GM23248 (cell line): ENCODE measurements at regions of chr13 and their contacts with region 1.

Region 1: GRCh38 chr13:36420437-36420891 is 11.8 kb upstream of the CCNA1 start:
- DNase-seq: peak; percentile 80
- H3K4me3 ChIP-seq: no peak overlapping the region
- H3K27ac ChIP-seq: no peak overlapping the region
- H3K4me1 ChIP-seq: peaks cover 9% of the 10 kb centered on the region
- H3K27me3 ChIP-seq: 0 out of 2 replicates have a peak, but pooled peaks cover 8% of the 10 kb centered on the region

Region 2: GRCh38 chr13:36549755-36550154 is 129.3 kb after region 1 on chr13:
- in situ Hi-C with region 1: no loop called
- DNase-seq: no peak
- H3K4me3 ChIP-seq: no peak overlapping the region
- H3K27ac ChIP-seq: no peak overlapping the region
- H3K4me1 ChIP-seq: no peaks in the 10 kb centered on the region
- H3K27me3 ChIP-seq: no peaks in the 10 kb centered on the region

Region 3: GRCh38 chr13:36999054-36999714 is 578.7 kb after region 1 on chr13 and contains the start of gene ALG5:
- in situ Hi-C with region 1: loop called (anchors 25 kb)
- DNase-seq: peak; percentile 94
- H3K4me3 ChIP-seq: peak within 1 kb of the TSS; percentile 95
- H3K27ac ChIP-seq: peak within 1 kb of the TSS; percentile 97
- H3K4me1 ChIP-seq: peaks cover 16% of the 10 kb centered on the region
- H3K27me3 ChIP-seq: no peaks in the 10 kb centered on the region
- total RNA-seq, gene ALG5: 29.6 and 30.2 TPM in 2 replicates